Motor neuron (in vitro differentiated cells): ENCODE measurements at regions of chr11 and their contacts with region 1.

Region 1: DNA sequence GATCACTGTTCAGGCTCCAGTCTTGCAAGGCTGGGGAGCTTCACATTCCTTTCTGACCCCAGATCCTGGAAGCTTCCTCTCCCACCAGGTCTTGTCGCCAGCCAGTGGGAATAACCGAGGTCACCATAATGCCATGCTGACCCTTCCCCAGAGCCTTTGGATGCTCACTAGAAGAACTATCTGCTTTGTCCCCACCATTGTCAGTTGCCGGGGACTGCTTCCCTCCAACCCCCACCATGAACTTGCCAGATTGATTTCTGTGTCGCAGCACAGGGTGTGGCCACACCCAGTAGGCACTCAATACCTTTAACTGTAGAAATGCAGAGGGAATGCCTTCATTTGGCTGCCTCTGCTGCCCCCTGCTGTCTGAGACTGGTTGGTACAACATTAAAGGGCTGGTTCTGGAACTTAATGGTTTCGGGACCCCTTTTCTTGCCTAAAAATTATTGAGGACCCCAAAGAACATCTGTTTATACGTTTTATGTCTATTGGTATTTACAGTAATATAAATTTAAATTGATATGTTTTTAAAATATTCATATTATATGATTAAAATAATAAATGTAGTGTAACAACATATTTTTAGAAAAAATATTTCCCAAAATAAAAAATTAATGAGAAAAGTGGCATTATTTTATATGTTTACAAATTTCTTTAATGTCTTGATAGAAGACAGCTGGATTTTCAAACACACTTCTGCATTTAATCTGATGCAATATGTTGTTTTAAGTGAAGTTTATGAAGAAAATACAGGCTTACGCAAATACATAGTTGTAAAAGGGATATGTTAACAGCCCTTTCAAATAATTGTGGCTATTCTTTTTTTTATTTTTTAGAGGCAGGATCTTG is 6.7 kb upstream of the GDPD5 start:
- ATAC-seq: peak; percentile 36 to 80 (median 74)
- H3K4me3 ChIP-seq: no peak overlapping the region
- H3K27ac ChIP-seq: no peak overlapping the region
- H3K4me1 ChIP-seq: peaks cover 12 to 13% of the 10 kb centered on the region in 2 donors

Region 2: DNA sequence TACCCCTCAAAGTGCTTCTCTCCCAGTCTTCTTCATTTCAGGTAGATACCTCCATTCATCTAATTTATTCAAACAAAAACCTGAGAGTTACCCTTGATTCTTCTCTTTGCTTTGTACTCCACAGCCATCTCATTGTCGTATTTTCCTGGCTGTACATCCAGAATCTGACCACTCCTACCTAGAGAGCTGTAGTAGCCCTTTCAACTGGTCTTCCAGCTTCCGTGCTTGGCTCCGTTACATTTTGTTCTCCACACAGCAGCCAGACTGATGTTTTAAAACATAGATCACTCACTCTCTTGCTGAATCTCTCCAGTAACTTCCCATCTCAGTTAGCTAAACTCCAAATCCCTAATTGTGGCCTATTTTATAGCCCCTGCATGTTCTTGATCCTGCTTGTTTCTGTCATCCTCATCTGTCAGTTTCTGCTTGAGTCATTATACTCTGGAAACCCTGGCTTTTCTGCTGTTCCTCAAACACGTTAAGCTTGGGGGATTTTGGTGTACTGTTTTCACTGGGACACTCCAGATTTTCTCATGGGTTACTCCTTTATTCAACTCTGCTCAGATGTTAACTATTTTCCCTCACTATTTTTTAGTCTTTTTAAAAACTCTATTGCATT is 575.9 kb before region 1 on chr11:
- in situ Hi-C with region 1: no loop called
- ATAC-seq: no peak
- H3K4me3 ChIP-seq: no peak overlapping the region
- H3K27ac ChIP-seq: no peak overlapping the region
- H3K4me1 ChIP-seq: no peaks in the 10 kb centered on the region

Region 3: GRCh38 chr11:75445315-75445953 is 87.0 kb before region 1 on chr11:
- in situ Hi-C with region 1: loop called in 5 of 9 experiments (anchors 5 to 10 kb)
- ATAC-seq: peak; percentile 85 to 97 (median 88)
- H3K4me3 ChIP-seq: no peak overlapping the region
- H3K27ac ChIP-seq: no peak overlapping the region
- H3K4me1 ChIP-seq: no peaks in the 10 kb centered on the region